ENCODE measurements at regions of chr2 and their contacts with region 1.

Region 1: GRCh38 chr2:222860740-222861410 is at the start of gene ACSL3:
- DNase-seq: peak; percentile 97
- H3K4me3 ChIP-seq: peak within 1 kb of the TSS; percentile 65 to 93 (median 84)
- H3K27ac ChIP-seq: peak within 1 kb of the TSS; percentile 94 to 99 (median 98)
- H3K4me1 ChIP-seq: peaks cover 18 to 48% (median 39%) of the 10 kb centered on the region in 4 donors
- H3K27me3 ChIP-seq: no peaks in the 10 kb centered on the region
- CTCF ChIP-seq: peak in 1 of 5 experiments; percentile 32
- EP300 ChIP-seq: no peak
- POLR2A ChIP-seq: peak; percentile 99
- total RNA-seq, gene ACSL3: 22.4 to 54.1 (median 42.3) TPM

Region 2: DNA sequence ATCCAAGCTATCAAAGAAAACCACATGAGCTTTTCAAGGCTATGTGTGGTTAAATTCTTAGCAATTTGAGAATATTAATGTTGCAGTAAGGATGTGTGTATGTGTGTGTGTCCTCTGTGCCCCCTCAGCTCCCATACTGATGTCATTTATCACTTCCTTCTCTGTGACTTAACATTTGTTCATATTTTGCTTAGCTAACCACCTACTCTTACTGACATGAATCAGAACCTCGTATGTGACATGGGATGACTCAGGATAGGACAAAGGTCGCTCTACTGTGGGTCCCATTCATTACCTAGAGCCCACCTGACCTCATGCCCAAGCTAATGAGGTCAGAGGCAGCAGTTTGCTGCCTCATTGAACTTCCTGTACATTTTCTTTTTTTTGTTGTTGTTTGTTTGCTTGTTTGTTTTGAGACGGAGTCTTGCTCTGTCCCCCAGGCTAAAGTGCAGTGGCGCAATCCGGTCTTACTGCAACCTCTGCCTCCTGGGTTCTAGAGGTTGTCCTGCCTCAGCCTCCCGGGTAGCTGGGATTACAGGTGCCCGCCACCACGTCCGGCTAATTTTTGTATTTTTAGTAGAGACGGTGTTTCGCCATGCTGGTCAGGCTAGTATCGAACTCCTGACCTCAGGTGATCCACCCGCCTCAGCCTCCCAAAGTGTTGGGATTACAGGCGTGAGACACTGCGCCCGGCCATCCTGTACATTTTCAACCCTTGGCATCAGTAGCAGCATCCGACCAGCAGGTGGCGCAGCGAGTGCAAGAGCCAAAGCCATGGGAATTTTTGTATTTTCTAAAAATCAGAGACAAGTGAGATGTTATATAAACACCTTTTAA is 153.0 kb before region 1 on chr2:
- in situ Hi-C with region 1: no loop called
- intact Hi-C with region 1: loop called (anchors 5 kb)
- DNase-seq: peak; percentile 82
- H3K4me3 ChIP-seq: no peak overlapping the region
- H3K27ac ChIP-seq: no peak overlapping the region
- H3K4me1 ChIP-seq: peaks cover 0 to 17% (median 10%) of the 10 kb centered on the region in 4 donors
- H3K27me3 ChIP-seq: no peaks in the 10 kb centered on the region
- CTCF ChIP-seq: peak; percentile 95 to 99 (median 96)
- EP300 ChIP-seq: no peak
- POLR2A ChIP-seq: no peak

Region 3: DNA sequence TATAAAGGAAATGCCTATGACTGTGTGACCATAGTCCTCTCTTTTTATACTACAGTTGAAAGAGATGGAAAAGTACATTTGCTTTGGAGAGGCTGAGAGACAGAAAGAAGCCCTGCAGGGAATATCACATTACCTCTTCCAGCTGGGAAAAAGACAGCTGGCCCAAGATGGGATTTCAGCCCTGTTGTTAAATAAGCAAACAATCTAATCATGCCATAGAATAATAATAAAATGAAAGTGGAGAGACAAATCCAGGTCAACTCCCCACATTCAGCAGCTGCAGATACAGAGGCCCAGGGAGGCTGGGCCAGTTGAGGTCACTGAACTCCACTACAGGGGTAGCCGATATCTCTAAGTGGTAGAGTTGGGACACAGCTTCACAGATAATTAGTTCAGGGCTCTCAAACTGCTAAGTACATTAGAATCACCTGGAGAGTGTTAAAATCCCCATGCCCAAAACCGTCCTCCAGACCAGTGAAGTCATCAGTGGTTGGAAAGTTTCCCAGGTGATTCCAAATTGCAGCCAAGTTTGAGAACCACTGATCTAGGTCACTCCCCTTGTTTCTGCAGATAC is 107.5 kb before region 1 on chr2:
- in situ Hi-C with region 1: no loop called
- intact Hi-C with region 1: no loop called
- DNase-seq: no peak
- H3K4me3 ChIP-seq: no peak overlapping the region
- H3K27ac ChIP-seq: peak overlapping the region in 3 of 4 donors; percentile 8 to 28 (median 14)
- H3K4me1 ChIP-seq: peaks cover 3 to 18% (median 7%) of the 10 kb centered on the region in 4 donors
- H3K27me3 ChIP-seq: no peaks in the 10 kb centered on the region
- CTCF ChIP-seq: no peak
- EP300 ChIP-seq: no peak
- POLR2A ChIP-seq: no peak